Sigmoid colon (tissue), 7 donors: ENCODE measurements at regions of chr6 and their contacts with region 1.

Region 1: DNA sequence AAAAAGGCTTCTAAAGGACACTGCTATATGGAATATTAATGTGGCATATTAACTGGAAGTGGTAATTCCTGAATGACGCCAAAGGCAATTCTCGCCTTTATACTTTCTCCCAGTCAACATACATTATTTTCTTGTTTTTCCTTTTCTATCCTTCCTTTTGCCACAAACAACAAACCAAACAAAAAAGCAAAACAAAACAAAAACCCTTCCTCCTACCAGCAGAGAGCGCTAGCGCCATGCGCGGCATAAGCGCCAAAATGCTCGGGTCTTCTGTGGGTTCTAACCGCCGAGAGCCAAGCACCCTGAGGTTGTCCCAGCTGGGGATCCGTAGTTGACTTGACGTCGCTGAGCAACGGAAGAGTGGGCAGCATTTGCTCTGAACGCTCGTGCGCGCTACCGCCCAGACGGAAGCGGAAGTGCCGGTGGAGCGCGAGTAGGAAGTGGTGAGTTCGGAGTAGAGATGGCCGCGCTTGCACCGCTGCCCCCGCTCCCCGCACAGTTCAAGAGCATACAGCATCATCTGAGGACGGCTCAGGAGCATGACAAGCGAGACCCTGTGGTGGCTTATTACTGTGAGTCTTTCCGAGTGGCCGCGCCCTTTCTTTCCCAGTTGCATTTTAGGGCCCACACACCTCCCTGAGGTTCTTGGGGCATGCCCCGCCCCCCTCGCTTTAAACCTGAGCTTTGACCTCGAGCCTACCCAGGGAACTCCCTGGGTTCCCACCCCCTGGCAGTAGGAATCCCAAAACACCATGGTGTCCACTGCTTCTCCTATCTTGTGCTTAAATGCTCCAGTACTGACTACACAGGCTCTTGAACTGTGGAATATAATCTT is at the starts of genes NMBR and VTA1:
- DNase-seq: peak; percentile 98
- H3K4me3 ChIP-seq: peak within 1 kb of the TSS; percentile 73 to 89 (median 85)
- H3K27ac ChIP-seq: peak within 1 kb of the TSS; percentile 70 to 80 (median 76)
- H3K4me1 ChIP-seq: peaks cover 0 to 27% (median 22%) of the 10 kb centered on the region in 4 donors
- H3K27me3 ChIP-seq: no peaks in the 10 kb centered on the region
- CTCF ChIP-seq: peak; percentile 83 to 86 (median 86)
- EP300 ChIP-seq: peak in 1 of 4 donors; percentile 66
- POLR2A ChIP-seq: no peak
- total RNA-seq, gene NMBR: not detected
- total RNA-seq, gene VTA1: 33.3 to 46.2 (median 36.6) TPM

Region 2: GRCh38 chr6:142207265-142207877 is 60.3 kb after region 1 on chr6:
- intact Hi-C with region 1: loop called (anchors 2 kb)
- DNase-seq: no peak
- H3K4me3 ChIP-seq: no peak overlapping the region
- H3K27ac ChIP-seq: no peak overlapping the region
- H3K4me1 ChIP-seq: no peaks in the 10 kb centered on the region
- H3K27me3 ChIP-seq: no peaks in the 10 kb centered on the region
- CTCF ChIP-seq: peak in 3 of 4 experiments; percentile 55 to 68 (median 58)
- EP300 ChIP-seq: no peak
- POLR2A ChIP-seq: no peak

Region 3: DNA sequence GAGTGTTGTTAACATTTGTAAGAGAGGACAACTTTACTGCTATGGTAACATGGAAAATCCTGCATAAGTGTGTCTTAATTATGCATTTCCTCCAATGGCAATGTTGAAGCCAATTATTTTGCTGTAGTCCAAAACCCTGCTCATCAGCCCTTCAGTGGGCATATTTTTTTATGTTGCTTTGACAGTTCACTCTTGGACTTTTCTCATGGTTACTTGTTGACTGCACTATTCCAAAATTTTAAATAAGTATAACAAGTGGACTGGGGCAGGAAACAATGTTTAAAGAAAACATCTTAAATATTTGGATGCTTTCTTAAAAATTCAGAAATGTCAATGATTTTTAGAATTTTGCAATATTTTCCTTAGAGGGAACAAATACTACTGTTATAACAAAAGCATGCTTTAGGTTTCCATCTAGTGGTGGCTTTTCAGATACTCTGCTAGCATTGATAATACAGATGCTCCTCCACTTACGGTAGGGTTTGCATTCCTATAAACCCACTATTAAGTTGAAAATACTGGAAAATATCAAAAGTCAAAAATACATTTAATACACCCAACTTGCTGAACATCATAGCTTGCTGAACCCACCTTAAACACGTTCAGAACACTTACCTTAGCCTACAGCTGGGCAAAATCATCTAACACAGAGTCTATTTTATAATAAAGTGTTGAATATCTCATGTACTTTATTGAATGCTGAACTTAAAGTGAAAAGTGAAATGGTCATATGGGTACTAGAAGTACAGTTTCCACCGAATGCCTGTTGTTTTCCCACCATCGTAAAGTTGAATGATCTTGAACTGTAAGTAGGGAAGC is 241.2 kb after region 1 on chr6:
- intact Hi-C with region 1: loop called (anchors 5 kb)
- DNase-seq: no peak
- H3K4me3 ChIP-seq: no peak overlapping the region
- H3K27ac ChIP-seq: no peak overlapping the region
- H3K4me1 ChIP-seq: no peaks in the 10 kb centered on the region
- H3K27me3 ChIP-seq: no peaks in the 10 kb centered on the region
- CTCF ChIP-seq: peak in 2 of 4 experiments; percentile 23 to 33
- EP300 ChIP-seq: no peak
- POLR2A ChIP-seq: no peak